Activated B cell treated with CpG ODN at 0.5 μM for 24 hours (primary cell): ENCODE measurements at regions of chr18 and their contacts with region 1.

Region 1: GRCh38 chr18:79951578-79952455 is at the start of gene SLC66A2:
- DNase-seq: peak; percentile 97
- ATAC-seq: peak; percentile 80
- H3K4me3 Mint-ChIP-seq: peak within 1 kb of the TSS; percentile 85
- H3K27ac Mint-ChIP-seq: peak within 1 kb of the TSS; percentile 92
- H3K4me1 Mint-ChIP-seq: peaks cover 31% of the 10 kb centered on the region
- H3K27me3 Mint-ChIP-seq: no peaks in the 10 kb centered on the region
- CTCF ChIP-seq: no peak
- total RNA-seq, gene SLC66A2: 32.3 and 36.4 TPM in 2 replicates

Region 2: DNA sequence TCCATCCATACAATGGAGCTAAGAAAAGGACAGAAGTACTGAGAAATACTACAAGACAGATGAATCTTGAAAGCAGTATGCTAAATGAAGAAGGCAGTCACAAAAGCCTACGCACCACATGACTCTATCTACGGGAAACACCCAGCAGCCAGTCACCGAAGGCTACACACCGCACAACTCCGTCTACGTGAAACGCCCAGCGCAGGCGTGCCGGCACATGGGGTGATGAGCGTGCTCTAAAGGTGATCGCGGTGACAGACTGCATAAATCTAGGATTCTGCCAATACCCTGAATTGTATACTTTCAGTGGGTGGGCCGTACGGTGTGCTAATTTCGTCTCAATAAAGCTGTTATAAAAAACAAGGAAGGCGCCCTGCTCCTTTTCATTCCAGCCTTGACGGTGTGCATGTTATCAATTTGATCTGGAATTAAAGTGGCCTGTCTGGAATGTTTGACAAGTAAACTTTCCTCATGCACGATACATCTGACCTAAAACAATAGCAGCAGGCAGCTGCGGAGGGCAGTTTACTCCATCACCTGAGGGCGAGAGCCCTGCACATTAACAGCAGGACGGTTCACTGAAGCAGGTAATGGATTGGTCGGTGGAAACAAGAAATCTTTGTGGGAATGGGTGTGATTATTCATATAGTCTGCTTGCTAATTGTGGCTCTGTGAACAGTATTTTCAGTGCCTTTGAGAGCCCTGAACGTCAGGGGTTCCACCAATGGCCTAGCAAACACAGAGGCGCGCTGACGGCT is 1058.4 kb before region 1 on chr18:
- CTCF ChIA-PET with region 1: no interaction called
- POLR2A ChIA-PET with region 1: no interaction called
- intact Hi-C with region 1: no loop called
- DNase-seq: no peak
- ATAC-seq: no peak
- H3K4me3 Mint-ChIP-seq: no peak overlapping the region
- H3K27ac Mint-ChIP-seq: no peak overlapping the region
- H3K4me1 Mint-ChIP-seq: no peaks in the 10 kb centered on the region
- H3K27me3 Mint-ChIP-seq: no peaks in the 10 kb centered on the region
- CTCF ChIP-seq: no peak

Region 3: DNA sequence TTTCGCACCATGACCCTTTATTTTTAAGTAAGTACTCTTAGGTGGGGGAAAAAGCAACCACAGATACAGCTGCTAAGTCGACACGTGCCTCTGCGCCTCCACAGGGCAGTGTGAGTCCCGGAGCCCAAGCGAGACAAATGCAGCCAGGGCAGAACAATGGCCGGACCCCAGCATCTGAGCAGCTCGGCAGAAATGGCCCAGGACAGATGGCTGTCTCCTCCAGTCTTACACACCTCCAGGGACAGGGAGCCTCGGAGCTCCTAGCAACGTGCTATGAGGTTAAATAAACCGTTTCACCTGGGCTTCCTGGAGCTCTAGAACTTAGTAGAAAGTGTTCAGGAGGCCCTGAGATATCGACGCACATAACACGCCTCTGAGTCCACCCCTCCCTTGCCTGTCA is 1019.5 kb before region 1 on chr18:
- CTCF ChIA-PET with region 1: no interaction called
- POLR2A ChIA-PET with region 1: no interaction called
- intact Hi-C with region 1: no loop called
- DNase-seq: no peak
- ATAC-seq: no peak
- H3K4me3 Mint-ChIP-seq: no peak overlapping the region
- H3K27ac Mint-ChIP-seq: no peak overlapping the region
- H3K4me1 Mint-ChIP-seq: no peaks in the 10 kb centered on the region
- H3K27me3 Mint-ChIP-seq: no peaks in the 10 kb centered on the region
- CTCF ChIP-seq: no peak

Region 4: DNA sequence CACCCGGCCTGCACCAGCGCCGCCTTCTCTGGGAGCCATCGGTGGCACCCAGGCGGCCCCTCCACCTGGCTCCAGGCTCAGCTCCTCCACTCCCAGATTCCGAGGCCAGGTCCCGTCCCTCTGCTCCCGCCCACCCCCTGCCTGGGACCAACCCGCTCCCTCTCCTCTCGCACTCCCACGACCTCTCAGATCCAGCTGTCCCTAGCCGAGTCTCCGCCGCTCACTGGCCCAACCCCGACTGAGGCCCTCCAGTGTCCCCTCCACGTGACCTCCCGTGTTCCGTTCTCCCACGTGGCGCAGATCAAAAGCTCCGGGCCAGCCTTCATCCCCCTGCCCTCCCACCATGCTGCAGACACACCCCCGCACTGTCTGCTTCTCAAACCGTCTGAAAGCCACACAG is 986.6 kb before region 1 on chr18:
- CTCF ChIA-PET with region 1: no interaction called
- POLR2A ChIA-PET with region 1: no interaction called
- intact Hi-C with region 1: no loop called
- DNase-seq: no peak
- ATAC-seq: no peak
- H3K4me3 Mint-ChIP-seq: no peak overlapping the region
- H3K27ac Mint-ChIP-seq: no peak overlapping the region
- H3K4me1 Mint-ChIP-seq: no peaks in the 10 kb centered on the region
- H3K27me3 Mint-ChIP-seq: no peaks in the 10 kb centered on the region
- CTCF ChIP-seq: no peak

Region 5: GRCh38 chr18:79819968-79820351 is 131.9 kb before region 1 on chr18:
- CTCF ChIA-PET with region 1: no interaction called
- POLR2A ChIA-PET with region 1: interaction called, 3 read pairs
- intact Hi-C with region 1: loop called (anchors 2 kb)
- DNase-seq: peak; percentile 42
- ATAC-seq: peak; percentile 94
- H3K4me3 Mint-ChIP-seq: peak overlapping the region; percentile 73
- H3K27ac Mint-ChIP-seq: peak overlapping the region; percentile 84
- H3K4me1 Mint-ChIP-seq: peaks cover 36% of the 10 kb centered on the region
- H3K27me3 Mint-ChIP-seq: peaks cover 3% of the 10 kb centered on the region
- CTCF ChIP-seq: no peak

Region 6: GRCh38 chr18:79912409-79912991 is 39.3 kb before region 1 on chr18:
- CTCF ChIA-PET with region 1: no interaction called
- POLR2A ChIA-PET with region 1: no interaction called
- intact Hi-C with region 1: loop called (anchors 5 kb)
- DNase-seq: peak; percentile 12
- ATAC-seq: peak; percentile 60
- H3K4me3 Mint-ChIP-seq: no peak overlapping the region
- H3K27ac Mint-ChIP-seq: no peak overlapping the region
- H3K4me1 Mint-ChIP-seq: peaks cover 31% of the 10 kb centered on the region
- H3K27me3 Mint-ChIP-seq: no peaks in the 10 kb centered on the region
- CTCF ChIP-seq: no peak

Region 7: DNA sequence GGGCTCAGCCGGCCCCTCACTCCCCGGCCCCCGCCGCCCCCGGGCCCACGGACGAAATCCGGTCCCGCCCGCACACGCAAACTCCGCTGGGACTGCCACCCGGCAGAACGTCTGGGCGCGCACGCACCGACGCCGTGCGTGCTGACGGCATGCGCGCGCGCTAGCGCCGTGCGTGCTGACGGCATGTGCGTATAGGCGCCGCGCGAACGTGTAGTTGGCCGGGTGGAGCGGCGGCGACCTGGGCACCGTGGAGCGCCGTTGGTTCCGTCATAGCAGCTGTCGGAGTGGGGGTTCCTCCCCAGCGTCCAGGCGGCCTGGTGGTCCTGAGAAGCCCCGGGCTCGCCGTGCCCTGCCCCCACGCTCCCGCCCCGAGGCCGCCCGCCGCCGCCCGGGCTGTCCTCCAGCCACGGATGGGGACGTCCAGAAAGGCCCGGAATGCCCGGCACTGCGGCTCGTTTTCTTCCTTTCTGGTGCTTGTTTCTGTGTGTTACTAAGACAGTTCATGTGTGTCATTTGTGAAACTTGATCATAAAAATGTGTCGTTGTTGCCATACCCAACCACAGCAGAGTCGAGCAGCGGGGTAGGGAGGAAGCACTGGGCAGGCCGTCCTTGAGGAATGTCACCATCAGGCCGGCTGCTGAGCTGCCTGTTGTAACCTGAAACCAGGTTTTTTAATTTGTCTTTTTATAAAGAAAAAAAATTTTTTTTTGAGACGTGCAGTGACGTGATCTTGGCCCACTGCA is 36.8 kb after region 1 on chr18 and contains the start of gene TXNL4A:
- CTCF ChIA-PET with region 1: no interaction called
- POLR2A ChIA-PET with region 1: interaction called, 20 read pairs
- intact Hi-C with region 1: loop called (anchors 1 kb)
- DNase-seq: peak; percentile 87
- ATAC-seq: peak; percentile 92
- H3K4me3 Mint-ChIP-seq: peak within 1 kb of the TSS; percentile 91
- H3K27ac Mint-ChIP-seq: peak within 1 kb of the TSS; percentile 92
- H3K4me1 Mint-ChIP-seq: peaks cover 34% of the 10 kb centered on the region
- H3K27me3 Mint-ChIP-seq: no peaks in the 10 kb centered on the region
- CTCF ChIP-seq: no peak
- total RNA-seq, gene TXNL4A: 94.7 and 96.9 TPM in 2 replicates

Region 8: DNA sequence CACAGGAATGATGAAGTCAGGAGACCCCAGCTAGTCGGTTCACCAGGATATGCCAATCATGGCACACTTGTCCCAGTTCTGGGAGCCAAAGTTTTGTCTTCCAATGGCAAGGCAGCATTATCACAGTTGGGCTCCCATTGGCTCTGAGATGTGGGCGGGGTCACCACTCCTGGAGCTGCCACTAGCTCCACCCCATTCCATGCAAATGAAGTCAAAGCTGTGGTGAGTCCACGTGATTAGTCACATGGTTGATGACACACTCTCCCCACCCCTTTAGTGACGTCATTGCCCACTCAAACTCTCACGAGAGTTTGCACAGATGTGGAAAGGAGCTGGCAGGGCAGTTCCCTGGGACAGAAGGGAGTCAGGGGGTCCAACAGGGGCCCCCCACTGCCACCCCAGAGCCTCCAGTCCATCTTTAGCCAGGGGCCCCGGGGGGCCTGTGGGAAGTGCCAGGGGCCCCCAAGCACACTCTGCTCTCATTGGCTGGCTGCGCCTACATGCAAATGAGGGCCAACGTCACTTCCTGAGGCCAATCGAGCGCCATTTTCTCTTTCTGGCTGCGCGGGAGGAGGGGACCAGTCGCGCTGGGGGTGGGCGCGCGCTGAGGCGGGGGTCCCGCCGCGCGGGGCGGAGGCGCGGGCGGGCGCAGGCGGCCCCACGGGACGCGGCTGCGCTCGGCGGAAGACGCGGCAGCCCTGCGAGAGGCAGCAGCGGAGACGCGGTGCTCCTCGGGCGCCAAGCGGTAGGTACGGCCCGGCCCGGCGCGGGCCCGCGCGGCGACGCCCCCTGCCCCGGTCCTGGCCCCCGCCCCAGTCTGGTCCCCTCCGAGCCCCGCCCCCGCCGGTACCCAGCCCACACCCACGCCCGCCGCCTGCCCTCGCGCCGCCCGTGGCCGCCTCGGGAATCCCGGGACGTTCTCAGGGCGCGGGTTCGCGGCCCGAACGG is 157.2 kb after region 1 on chr18 and contains the start of gene ADNP2:
- CTCF ChIA-PET with region 1: no interaction called
- POLR2A ChIA-PET with region 1: no interaction called
- intact Hi-C with region 1: loop called (anchors 2 kb)
- DNase-seq: peak; percentile 63
- ATAC-seq: peak; percentile 66
- H3K4me3 Mint-ChIP-seq: peak within 1 kb of the TSS; percentile 84
- H3K27ac Mint-ChIP-seq: peak within 1 kb of the TSS; percentile 80
- H3K4me1 Mint-ChIP-seq: peaks cover 45% of the 10 kb centered on the region
- H3K27me3 Mint-ChIP-seq: no peaks in the 10 kb centered on the region
- CTCF ChIP-seq: no peak
- total RNA-seq, gene ADNP2: 19.2 and 19.7 TPM in 2 replicates